Activated T-helper 1 cell treated with anti-CD3 and anti-CD28 coated beads, Interleukin-12 subunit alpha, Interleukin-12 subunit beta, Interleukin-2, Interleukin-4 antibody, amounts not matched to agents 30 ng/mL and 10 ng/mL and 1 ng/mL, durations not matched to agents 14 hours and 24 hours and 36 hours (primary cell): ENCODE measurements at regions of chr11 and their contacts with region 1.

Region 1: GRCh38 chr11:43311791-43312607 is at the start of gene API5:
- DNase-seq: peak; percentile 89
- H3K4me3 Mint-ChIP-seq: peak within 1 kb of the TSS; percentile 97
- H3K27ac Mint-ChIP-seq: peak within 1 kb of the TSS; percentile 93
- H3K4me1 Mint-ChIP-seq: peaks cover 50% of the 10 kb centered on the region
- H3K27me3 Mint-ChIP-seq: peaks cover 2% of the 10 kb centered on the region
- total RNA-seq, gene API5: 165 and 167 TPM in 2 replicates

Region 2: GRCh38 chr11:43327987-43328386 is 16.0 kb after region 1 on chr11:
- intact Hi-C with region 1: loop called (anchors 2 kb)
- DNase-seq: no peak
- H3K4me3 Mint-ChIP-seq: no peak overlapping the region
- H3K27ac Mint-ChIP-seq: no peak overlapping the region
- H3K4me1 Mint-ChIP-seq: peaks cover 5% of the 10 kb centered on the region
- H3K27me3 Mint-ChIP-seq: no peaks in the 10 kb centered on the region

Region 3: GRCh38 chr11:43393765-43394355 is 81.9 kb after region 1 on chr11:
- intact Hi-C with region 1: loop called (anchors 2 kb)
- DNase-seq: no peak
- H3K4me3 Mint-ChIP-seq: no peak overlapping the region
- H3K27ac Mint-ChIP-seq: no peak overlapping the region
- H3K4me1 Mint-ChIP-seq: peaks cover 44% of the 10 kb centered on the region
- H3K27me3 Mint-ChIP-seq: peaks cover 1% of the 10 kb centered on the region

Region 4: GRCh38 chr11:43567396-43567975 is 255.5 kb after region 1 on chr11:
- intact Hi-C with region 1: loop called (anchors 5 kb)
- DNase-seq: no peak
- H3K4me3 Mint-ChIP-seq: no peak overlapping the region
- H3K27ac Mint-ChIP-seq: no peak overlapping the region
- H3K4me1 Mint-ChIP-seq: no peaks in the 10 kb centered on the region
- H3K27me3 Mint-ChIP-seq: peaks cover 21% of the 10 kb centered on the region

Region 5: GRCh38 chr11:43680521-43681400 is 368.8 kb after region 1 on chr11 and contains the start of gene HSD17B12:
- intact Hi-C with region 1: loop called (anchors 1 kb)
- DNase-seq: peak; percentile 99
- H3K4me3 Mint-ChIP-seq: peak within 1 kb of the TSS; percentile 99
- H3K27ac Mint-ChIP-seq: peak within 1 kb of the TSS; percentile 94
- H3K4me1 Mint-ChIP-seq: peaks cover 40% of the 10 kb centered on the region
- H3K27me3 Mint-ChIP-seq: peaks cover 9% of the 10 kb centered on the region
- total RNA-seq, gene HSD17B12: 72.3 and 77.8 TPM in 2 replicates

Region 6: DNA sequence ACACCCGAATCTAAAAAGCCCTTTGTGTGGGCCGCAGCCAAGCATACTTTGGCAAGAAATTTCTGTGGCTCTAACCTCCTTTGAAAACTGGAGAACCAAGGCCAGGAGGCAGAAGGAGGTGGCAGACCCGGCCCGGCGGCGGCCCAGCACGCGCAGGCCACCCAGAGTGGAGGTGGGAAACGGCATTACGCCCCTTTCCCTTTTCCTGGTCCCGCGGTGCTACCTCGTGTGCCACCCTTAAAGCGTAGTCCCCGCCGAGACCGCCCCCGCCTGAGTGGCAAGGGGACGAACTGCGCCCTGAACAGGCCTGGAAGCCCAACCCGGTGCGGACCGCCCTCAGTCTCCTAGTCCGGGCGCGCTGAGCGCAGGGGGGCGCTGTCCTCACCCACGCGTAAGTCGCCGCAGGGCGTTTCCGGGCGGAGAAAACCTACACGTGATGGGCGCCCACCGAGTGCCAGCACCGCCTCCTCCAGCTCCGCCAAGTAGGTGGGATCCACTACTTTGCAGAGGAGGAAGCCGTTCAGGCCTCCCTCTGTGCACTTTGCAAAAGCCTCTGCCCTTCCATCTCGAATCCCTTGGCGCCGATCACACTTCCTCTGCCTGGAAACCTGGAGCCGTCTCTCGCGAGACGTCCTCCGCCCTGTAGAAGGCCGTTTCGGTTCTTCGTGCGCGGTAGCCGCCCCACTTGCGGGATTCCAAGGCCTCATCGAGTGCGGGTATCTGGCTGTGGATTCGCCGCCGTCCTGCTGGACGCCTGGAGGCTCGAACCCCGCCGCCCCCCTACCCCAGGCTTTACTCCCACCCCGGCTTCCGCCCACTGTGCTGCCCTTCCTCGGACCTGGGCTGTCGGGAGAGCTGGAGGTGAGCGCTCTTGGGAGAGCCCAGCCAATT is 754.1 kb after region 1 on chr11 and contains the start of gene ACCS:
- intact Hi-C with region 1: loop called (anchors 10 kb)
- DNase-seq: peak; percentile 83
- H3K4me3 Mint-ChIP-seq: peak within 1 kb of the TSS; percentile 91
- H3K27ac Mint-ChIP-seq: peak within 1 kb of the TSS; percentile 94
- H3K4me1 Mint-ChIP-seq: peaks cover 29% of the 10 kb centered on the region
- H3K27me3 Mint-ChIP-seq: peaks cover 4% of the 10 kb centered on the region
- total RNA-seq, gene ACCS: 14.7 and 18.1 TPM in 2 replicates

Region 7: GRCh38 chr11:44565211-44565952 is 1253.4 kb after region 1 on chr11 and contains the start of gene CD82:
- intact Hi-C with region 1: loop called (anchors 10 kb)
- DNase-seq: peak; percentile 98
- H3K4me3 Mint-ChIP-seq: peak within 1 kb of the TSS; percentile 92
- H3K27ac Mint-ChIP-seq: peak within 1 kb of the TSS; percentile 92
- H3K4me1 Mint-ChIP-seq: peaks cover 66% of the 10 kb centered on the region
- H3K27me3 Mint-ChIP-seq: no peaks in the 10 kb centered on the region
- total RNA-seq, gene CD82: 499 and 500 TPM in 2 replicates